ENCODE measurements at regions of chr20 and their contacts with region 1.

Region 1: GRCh38 chr20:48986899-48987298 is 59.2 kb upstream of the CSE1L start:
- DNase-seq: no peak

Region 2: GRCh38 chr20:49037962-49038387 is 51.1 kb after region 1 on chr20:
- intact Hi-C with region 1: no loop called
- DNase-seq: no peak

Region 3: DNA sequence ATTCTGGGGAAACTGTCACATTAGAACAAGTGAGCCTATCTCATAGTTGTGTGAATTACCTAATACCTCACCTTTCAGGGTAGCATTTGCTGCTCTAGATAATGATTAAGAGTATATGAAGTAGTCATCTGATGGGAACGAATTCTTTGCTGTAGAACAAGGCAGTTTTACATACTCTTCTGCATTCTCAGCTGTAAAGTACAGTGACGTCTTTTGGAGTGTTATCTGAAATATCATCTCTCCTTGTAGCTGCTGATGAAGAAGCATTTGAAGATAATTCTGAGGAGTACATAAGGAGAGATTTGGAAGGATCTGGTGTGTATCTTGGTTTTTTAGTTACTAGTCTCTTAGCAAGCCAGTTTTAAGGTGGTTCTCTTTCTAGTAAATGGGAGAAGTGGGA is 87.6 kb after region 1 on chr20:
- intact Hi-C with region 1: loop called in 1 of 2 experiments (anchors 5 kb)
- DNase-seq: no peak

Region 4: DNA sequence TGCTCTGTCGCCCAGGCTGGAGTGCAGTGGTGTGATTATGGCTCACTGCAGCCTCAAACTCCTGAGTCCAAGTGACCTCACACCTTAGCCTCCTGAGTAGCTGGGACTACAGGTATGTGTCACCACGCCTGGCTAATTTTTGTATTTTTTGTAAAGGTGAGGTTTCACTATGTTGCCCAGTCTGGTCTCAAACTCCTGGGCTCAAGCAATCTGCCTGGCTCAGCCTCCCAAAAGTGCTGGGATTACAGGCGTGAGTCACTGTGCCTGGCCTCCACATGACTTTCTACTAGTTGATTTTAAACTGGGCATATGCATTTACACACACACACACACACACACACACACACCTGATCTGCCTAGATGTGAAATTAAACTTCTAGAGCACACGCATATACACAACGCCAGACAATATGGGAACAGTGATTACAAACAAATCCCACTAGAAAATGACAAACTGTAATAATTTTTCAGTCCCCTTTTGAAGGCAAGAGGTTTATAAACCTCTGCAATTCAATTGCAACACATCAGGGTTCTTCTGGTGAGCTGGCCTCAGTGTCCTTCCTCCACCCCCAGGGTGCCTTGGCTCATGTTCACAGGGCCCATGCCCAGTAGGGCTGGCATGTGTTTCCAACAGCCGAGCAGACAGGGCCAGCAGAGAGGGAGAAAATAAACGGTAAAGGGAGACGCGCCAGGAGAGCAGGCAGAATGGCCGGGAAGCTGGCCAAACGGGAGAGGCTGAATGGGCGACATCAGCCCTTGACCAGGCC is 1775.7 kb after region 1 on chr20:
- intact Hi-C with region 1: loop called in 1 of 2 experiments (anchors 5 kb)
- DNase-seq: no peak

Measured in posterior vena cava (tissue), 2 donors.